Posterior cingulate gyrus (tissue), 11 donors: ENCODE measurements at regions of chr6 and their contacts with region 1.

Region 1: DNA sequence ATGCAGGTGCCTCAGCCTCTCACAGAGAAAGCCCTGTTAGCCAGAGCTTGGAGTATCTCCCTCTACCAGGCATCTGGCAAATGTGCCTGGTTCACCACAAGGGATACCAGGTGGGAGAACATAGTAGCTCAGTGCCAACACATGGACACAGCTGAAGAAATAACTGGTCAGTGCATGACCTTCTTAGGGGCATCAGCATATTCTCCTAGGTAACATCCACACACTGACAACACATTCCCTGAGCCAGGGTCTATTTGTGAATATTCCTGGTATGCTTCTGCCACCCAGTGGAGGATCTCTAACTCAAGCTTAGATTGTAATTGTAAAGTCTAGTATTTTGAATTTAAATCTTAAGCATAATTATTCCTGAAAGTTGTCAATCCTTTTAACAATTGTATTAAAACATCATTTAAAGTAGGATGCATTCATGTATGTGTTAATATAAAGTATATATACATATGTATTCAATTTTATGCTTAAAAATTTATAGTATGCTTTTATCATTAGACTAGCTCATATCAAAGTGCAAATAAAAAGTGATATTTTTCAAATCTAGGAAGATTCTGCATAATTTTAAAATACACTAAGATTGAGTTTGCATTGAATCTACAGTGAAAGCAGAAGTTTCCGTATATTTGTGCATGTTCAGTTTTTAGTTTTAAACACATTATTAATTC is 45.3 kb upstream of the COL21A1 start:
- DNase-seq: peak in 3 of 10 donors; percentile 8 to 54 (median 10)

Region 2: GRCh38 chr6:55980627-55981211 is 311.9 kb before region 1 on chr6:
- intact Hi-C with region 1: loop called (anchors 1 kb)
- DNase-seq: peak in 1 of 10 donors; percentile 7

Region 3: DNA sequence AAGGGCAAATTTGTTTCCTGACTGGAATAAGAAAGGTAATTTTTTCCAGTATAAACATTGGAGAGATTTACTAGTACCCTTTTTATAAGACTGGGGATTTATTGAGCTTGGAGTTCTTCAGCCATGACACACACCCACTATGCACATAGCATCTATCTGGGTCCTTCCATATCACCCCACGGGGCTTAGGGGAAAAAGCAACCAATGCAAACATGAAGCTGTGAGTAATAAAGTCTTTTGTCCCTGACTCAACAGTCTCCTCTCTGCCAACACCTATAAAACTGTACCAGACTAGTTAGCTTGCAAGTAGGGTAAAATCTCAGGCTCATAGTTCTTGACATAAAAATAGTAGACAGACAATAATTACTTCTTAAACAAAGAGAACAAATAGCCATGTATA is 68.6 kb before region 1 on chr6:
- intact Hi-C with region 1: no loop called
- DNase-seq: no peak